Calu3 (cell line): ENCODE measurements at regions of chr1 and their contacts with region 1.

Region 1: DNA sequence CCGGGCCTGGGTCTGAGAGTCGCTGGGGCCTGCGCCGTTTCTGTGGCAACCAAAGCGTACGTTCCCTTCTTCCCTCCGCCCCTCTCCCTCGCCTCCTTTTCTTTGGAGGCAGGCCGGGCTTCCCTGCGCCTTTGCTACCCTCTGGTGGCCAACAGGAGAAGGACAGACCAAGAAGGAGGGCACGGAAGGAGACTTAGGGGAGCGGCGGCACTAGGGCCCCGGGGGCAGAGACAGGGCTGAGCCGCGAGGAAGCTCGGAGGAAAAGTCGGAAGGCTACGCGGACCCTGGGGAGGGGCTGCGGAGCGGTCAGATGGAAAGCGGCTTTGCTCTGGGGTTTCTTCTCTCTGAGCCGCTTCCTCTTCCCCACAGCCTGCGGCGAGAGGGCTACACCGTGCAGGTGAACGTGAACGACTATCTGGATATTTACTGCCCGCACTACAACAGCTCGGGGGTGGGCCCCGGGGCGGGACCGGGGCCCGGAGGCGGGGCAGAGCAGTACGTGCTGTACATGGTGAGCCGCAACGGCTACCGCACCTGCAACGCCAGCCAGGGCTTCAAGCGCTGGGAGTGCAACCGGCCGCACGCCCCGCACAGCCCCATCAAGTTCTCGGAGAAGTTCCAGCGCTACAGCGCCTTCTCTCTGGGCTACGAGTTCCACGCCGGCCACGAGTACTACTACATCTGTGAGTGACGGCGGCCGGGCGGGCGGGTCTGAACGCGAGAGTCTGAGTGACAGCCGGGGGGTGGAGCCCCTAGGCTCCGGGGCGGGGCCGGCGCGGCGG is 6.3 kb downstream of the EFNA3 start:
- DNase-seq: peak; percentile 97
- H3K4me3 Mint-ChIP-seq: peak overlapping the region; percentile 96
- H3K27ac Mint-ChIP-seq: peak overlapping the region; percentile 62
- H3K4me1 Mint-ChIP-seq: peaks cover 44% of the 10 kb centered on the region
- H3K27me3 Mint-ChIP-seq: peaks cover 44% of the 10 kb centered on the region
- CTCF ChIP-seq: peak; percentile 88

Region 2: DNA sequence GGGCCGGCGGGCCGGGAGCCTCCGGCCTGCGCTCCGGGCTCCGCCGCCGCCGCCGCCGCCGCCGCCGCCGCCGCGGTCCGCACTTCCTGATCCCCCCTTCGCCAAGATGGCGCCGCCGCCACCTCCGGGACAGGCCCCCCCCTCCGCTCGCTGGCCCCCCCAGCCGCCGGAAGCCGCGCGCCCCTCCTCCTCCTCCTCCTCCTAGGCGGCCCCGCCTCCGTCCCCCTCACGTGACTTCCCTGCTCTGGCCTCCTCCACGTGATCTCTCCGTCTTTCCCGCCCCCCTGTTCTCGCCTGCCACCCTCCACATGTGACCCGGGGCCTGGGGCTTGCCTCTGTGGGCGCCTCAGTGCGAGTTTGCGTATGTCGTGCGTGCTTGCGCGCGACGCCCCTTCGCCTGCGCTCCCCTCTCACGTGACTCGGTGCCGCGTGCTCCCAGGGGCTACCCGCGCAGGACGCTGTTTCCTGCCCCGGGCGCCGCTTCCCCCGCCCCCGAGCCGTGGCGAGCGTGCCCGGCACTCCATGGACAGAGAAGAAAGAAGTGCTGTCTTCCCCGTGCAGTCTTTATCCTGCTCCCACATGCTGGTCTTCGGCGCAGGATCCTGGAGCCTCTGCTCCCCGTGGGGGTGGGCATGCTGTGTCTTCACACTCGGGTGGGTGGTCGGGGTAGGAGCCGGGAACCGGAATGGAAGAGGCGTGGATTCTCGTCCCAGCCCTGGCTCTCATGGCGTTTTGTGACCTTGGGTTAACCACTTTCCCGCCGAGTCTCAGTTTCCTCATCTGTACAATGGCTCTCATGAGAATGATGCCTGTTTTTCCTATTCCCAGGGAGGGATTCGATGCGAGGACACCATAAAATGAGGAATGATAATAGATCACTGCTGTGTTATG is 526.1 kb before region 1 on chr1 and contains the start of gene UBE2Q1:
- CTCF ChIA-PET with region 1: no interaction called
- intact Hi-C with region 1: loop called (anchors 2 kb)
- DNase-seq: peak; percentile 99
- H3K4me3 Mint-ChIP-seq: peak within 1 kb of the TSS; percentile 83
- H3K27ac Mint-ChIP-seq: peak within 1 kb of the TSS; percentile 84
- H3K4me1 Mint-ChIP-seq: peaks cover 16% of the 10 kb centered on the region
- H3K27me3 Mint-ChIP-seq: no peaks in the 10 kb centered on the region
- CTCF ChIP-seq: no peak
- total RNA-seq, gene UBE2Q1: 96.7 and 108 TPM in 2 replicates

Region 3: DNA sequence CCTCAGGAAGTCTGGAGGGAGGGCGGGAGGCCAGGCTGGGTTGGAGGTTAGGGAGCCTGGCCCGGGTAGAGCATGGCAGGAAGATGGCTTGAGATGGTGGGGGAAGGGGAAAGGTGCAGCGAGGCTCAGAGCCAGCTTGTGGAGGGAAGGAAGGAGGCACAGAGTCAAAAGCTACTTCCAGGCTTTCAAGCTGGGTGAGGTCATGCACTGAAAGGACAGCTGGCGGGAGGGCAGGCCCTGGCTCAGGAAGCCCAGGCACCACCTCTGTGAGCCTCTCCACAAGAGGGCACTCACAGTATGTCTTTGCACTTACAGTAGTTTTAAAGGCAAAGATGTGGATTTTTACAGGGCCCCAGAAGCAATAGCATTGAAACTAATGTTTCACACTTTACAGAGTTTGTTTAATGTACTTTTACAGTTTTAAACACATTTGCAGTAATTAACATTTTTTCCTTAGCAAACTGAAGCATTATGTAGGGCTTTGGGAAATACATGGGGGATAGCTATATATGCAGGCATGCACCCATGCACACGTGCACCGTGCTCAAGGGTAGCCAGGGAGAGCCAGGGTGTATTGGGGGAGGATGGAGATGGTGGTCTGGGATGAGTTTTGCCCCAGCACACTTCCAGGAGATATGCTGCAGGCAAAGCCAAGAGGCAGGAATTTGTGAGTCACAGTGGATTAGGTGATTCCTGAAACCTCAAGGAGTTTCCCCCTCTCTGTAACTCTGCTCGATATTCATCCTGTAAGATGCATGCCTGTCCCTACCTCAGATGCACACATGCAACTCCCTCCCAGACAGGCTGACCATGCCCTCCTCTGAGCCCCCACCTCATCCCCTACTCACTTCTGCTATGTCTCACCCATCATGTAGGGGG is 39.9 kb before region 1 on chr1:
- CTCF ChIA-PET with region 1: interaction called, 26 read pairs
- intact Hi-C with region 1: loop called (anchors 5 kb)
- DNase-seq: peak; percentile 84
- H3K4me3 Mint-ChIP-seq: no peak overlapping the region
- H3K27ac Mint-ChIP-seq: no peak overlapping the region
- H3K4me1 Mint-ChIP-seq: peaks cover 34% of the 10 kb centered on the region
- H3K27me3 Mint-ChIP-seq: no peaks in the 10 kb centered on the region
- CTCF ChIP-seq: peak; percentile 49

Region 4: GRCh38 chr1:155063550-155064110 is 21.3 kb before region 1 on chr1 and contains the start of gene EFNA4:
- CTCF ChIA-PET with region 1: interaction called, 28 read pairs
- intact Hi-C with region 1: loop called (anchors 1 kb)
- DNase-seq: peak; percentile 90
- H3K4me3 Mint-ChIP-seq: peak within 1 kb of the TSS; percentile 76
- H3K27ac Mint-ChIP-seq: peak within 1 kb of the TSS; percentile 89
- H3K4me1 Mint-ChIP-seq: peaks cover 30% of the 10 kb centered on the region
- H3K27me3 Mint-ChIP-seq: no peaks in the 10 kb centered on the region
- CTCF ChIP-seq: no peak
- total RNA-seq, gene EFNA4: 12.6 and 13.9 TPM in 2 replicates

Region 5: DNA sequence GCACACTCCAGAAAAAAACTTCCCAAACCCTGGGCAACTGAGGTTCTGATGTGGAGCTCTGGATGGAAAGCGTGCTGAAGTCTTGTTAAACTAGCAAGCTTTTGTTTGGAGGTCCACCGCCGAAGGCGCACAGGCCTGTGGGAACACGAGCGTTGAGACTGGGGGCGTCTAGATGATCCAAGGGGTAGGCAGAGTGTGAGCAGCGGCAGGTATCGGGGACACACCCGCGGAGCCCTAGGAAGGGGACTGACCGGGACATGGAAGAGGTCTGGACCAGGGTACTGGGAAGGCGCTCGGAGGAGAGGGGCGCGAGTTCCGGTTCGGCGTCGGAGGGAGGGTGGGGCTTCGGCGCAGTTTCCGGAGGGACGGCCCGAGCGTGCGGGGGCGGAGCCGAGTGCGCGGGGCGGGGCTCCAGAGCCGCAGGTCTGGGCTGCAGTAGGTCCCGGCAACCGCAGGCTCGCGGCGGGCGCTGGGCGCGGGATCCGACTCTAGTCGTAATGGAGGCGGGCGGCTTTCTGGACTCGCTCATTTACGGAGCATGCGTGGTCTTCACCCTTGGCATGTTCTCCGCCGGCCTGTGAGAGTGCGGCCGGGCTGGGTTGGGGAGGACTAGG is 50.6 kb after region 1 on chr1 and contains the start of gene SLC50A1:
- CTCF ChIA-PET with region 1: interaction called, 13 read pairs
- intact Hi-C with region 1: no loop called
- DNase-seq: peak; percentile 99
- H3K4me3 Mint-ChIP-seq: peak within 1 kb of the TSS; percentile 86
- H3K27ac Mint-ChIP-seq: peak within 1 kb of the TSS; percentile 97
- H3K4me1 Mint-ChIP-seq: peaks cover 53% of the 10 kb centered on the region
- H3K27me3 Mint-ChIP-seq: no peaks in the 10 kb centered on the region
- CTCF ChIP-seq: peak; percentile 16
- total RNA-seq, gene SLC50A1: 68.5 and 72.0 TPM in 2 replicates

Region 6: DNA sequence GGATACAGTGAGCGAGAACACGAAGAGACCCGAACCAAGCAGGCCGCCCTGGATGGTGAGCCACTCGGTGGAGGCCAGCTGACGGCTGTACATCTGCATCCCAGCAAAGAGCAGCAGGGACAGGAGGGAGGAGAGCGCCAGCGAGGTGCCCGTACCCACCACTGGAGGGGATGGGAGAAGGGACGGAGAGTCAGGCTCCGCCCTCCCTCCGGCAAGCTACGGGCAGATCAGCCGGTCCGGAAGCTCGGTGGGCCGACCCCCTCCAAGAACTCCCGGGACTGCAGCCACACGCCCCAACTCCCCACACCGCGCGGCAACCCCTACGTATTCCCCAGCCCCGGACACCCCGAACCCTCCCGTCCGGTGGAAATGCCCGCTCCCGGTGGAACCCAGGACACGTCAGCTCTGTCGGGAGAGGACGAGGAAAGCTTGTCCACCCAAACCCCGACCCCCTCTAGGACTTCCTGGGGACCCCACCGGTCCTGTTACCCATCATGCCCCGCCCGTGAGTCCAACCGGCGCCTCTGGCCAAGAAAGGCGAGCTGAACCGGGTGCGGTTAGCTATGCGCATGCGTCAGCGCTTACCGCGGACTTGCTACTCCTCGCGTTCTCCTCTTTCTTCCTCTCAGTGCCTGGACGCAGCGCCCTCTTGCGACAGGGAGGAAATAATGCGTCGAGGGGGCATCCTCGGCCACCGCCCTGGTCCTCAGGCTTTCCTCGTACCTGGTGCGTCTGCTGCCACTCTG is 88.0 kb after region 1 on chr1 and contains the start of gene KRTCAP2:
- CTCF ChIA-PET with region 1: interaction called, 22 read pairs
- intact Hi-C with region 1: no loop called
- DNase-seq: peak; percentile 96
- H3K4me3 Mint-ChIP-seq: peak within 1 kb of the TSS; percentile 96
- H3K27ac Mint-ChIP-seq: peak within 1 kb of the TSS; percentile 83
- H3K4me1 Mint-ChIP-seq: peaks cover 45% of the 10 kb centered on the region
- H3K27me3 Mint-ChIP-seq: peaks cover 21% of the 10 kb centered on the region
- CTCF ChIP-seq: peak; percentile 89
- total RNA-seq, gene KRTCAP2: 236 TPM in 2 replicates

Region 7: GRCh38 chr1:155294520-155295182 is 209.7 kb after region 1 on chr1:
- CTCF ChIA-PET with region 1: no interaction called
- intact Hi-C with region 1: no loop called
- DNase-seq: no peak
- H3K4me3 Mint-ChIP-seq: no peak overlapping the region
- H3K27ac Mint-ChIP-seq: no peak overlapping the region
- H3K4me1 Mint-ChIP-seq: no peaks in the 10 kb centered on the region
- H3K27me3 Mint-ChIP-seq: peaks cover 42% of the 10 kb centered on the region
- CTCF ChIP-seq: no peak